ENCODE measurements at regions of chr6 and their contacts with region 1.

Region 1: DNA sequence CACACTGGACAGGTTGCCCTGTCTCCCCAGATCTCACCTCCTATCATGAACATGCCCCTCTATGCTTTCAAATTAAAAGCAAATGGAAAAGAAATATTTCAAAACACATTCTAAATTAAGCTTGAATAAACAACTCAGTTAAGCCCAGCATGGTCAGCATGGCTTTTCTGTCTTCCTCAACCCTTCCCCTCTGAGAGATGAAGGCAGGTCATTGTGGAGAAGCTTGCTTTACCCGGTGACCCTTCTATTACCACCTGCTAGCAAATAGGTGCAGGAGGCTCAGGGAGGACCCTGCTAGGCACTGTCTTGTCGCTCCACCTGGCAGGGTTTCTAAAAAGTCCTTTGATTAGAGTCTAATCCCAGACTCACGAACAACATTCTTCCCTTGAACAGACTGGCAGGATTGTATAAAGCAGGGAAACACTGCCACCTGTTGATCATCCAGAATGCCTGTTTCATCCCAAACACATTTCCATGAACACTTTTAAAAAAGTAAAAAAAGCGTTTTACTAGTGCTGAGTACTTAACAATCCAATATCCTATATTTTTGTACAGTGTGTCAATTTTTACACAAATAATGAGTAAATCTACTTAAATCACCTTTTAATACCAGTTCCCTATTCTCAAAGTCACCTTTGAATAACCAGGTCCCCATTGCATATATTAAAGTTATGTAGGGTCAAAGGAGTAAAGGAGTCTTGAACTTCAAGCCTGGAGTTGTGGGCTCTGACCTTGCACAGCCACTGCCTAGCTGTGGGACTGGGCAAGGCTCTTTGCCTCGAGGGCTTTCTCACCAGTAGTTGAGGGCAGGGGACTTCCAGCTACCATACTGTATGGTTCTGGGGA is 75.5 kb downstream of the GPR6 start:
- DNase-seq: no peak
- ATAC-seq: peak; percentile 63
- H3K4me3 ChIP-seq: no peak overlapping the region
- H3K27ac ChIP-seq: no peak overlapping the region
- H3K4me1 ChIP-seq: no peaks in the 10 kb centered on the region
- H3K27me3 ChIP-seq: peaks cover 0 to 4% of the 10 kb centered on the region in 2 donors

Region 2: DNA sequence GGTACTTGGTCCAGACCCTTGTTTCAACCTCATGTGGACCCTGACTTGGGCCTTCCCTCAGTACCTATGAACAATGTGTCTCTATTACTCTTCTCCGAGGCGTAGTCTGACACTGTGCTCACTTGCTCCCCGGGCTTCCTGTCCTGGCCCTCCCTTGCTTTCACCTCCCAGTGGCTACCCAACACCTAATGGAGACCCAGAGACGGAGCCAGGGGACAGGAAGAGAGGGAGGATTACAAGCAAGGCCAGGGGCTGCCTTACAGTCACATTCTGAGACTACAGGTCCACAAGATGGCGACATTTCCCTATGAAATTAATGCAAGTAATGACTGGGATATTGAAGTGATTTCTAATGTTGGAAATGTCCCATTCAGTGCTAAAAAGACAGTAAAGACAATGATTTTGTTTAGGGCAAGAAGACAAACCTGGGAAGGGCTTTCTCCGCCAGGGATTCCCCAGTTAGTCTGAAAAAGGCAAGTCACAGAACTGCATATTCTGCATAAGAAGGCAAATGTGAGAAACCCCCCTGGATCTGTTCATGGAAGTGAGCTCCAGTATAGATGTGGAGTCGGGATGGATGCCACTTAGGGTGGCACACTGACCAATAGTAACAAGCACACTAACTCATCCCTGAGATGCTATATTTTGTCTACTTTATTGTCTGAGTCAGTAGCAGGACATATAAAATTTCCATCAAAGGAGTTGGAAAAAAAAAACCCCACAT is 526.6 kb before region 1 on chr6:
- intact Hi-C with region 1: loop called in 1 of 2 experiments (anchors 5 kb)
- DNase-seq: peak in 1 of 2 donors; percentile 53
- ATAC-seq: peak; percentile 74
- H3K4me3 ChIP-seq: no peak overlapping the region
- H3K27ac ChIP-seq: no peak overlapping the region
- H3K4me1 ChIP-seq: no peaks in the 10 kb centered on the region
- H3K27me3 ChIP-seq: no peaks in the 10 kb centered on the region

Region 3: DNA sequence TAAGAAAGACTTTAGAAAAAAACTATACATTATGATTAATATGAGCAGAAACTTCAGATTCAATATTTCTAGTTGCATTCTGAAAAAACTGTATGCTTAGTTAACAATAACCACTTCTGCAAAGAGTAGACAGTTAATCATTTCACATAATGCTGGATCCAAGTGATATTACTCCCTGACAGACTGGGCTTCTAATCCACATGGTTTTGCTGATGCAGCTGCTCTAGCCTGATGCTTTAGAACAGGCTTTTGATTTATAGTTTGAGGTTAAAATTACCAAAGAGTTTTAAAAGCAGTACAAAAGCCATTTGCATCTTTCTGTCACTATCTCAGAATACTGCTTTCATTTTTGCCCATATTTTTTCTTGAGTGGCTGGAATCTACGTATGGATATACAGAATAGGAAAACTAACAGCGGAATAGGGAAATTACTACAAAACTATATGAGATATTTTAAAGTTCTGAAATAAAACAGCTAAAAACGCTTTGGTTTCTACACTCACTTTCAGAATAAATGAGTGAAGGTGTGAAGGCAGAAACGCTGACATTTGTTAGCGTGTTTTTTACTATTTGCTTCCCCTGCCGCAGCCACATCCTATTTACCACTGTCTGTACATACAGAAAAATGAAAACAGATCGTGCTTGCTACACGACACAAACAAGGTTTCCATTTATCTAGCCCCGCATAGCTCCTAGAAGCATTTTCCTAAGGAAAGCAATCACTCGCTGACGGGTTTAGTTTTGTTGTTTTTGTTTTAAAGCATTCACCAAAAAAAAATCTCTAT is 242.8 kb after region 1 on chr6:
- intact Hi-C with region 1: no loop called
- DNase-seq: no peak
- ATAC-seq: no peak
- H3K4me3 ChIP-seq: no peak overlapping the region
- H3K27ac ChIP-seq: no peak overlapping the region
- H3K4me1 ChIP-seq: no peaks in the 10 kb centered on the region
- H3K27me3 ChIP-seq: no peaks in the 10 kb centered on the region

Measured in aorta (tissue), 5 donors.